Mammary epithelial cell (primary cell): ENCODE measurements at regions of chr10 and their contacts with region 1.

Region 1: GRCh38 chr10:90125456-90126255 is 424.3 kb downstream of the KIF20B start:
- DNase-seq: peak; percentile 77
- H3K4me3 ChIP-seq: no peak overlapping the region
- H3K27ac ChIP-seq: no peak overlapping the region
- H3K4me1 ChIP-seq: peaks cover 15% of the 10 kb centered on the region
- H3K27me3 ChIP-seq: no peaks in the 10 kb centered on the region
- CTCF ChIP-seq: peak; percentile 20 to 29

Region 2: GRCh38 chr10:90087197-90088007 is 38.3 kb before region 1 on chr10:
- CTCF ChIA-PET with region 1: no interaction called
- dilution Hi-C with region 1: loop called (anchors 5 kb)
- in situ Hi-C with region 1: no loop called
- intact Hi-C with region 1: no loop called
- DNase-seq: peak; percentile 87
- H3K4me3 ChIP-seq: no peak overlapping the region
- H3K27ac ChIP-seq: peak overlapping the region; percentile 89
- H3K4me1 ChIP-seq: peaks cover 11% of the 10 kb centered on the region
- H3K27me3 ChIP-seq: no peaks in the 10 kb centered on the region
- CTCF ChIP-seq: no peak